Common myeloid progenitor, CD34-positive (primary cell): ENCODE measurements at regions of chr17 and their contacts with region 1.

Region 1: GRCh38 chr17:29148790-29149430 is 31.3 kb downstream of the MYO18A start:
- DNase-seq: peak; percentile 85 to 87 (median 86)
- H3K4me3 ChIP-seq: peak overlapping the region; percentile 31 to 82 (median 61)
- H3K27ac ChIP-seq: peak overlapping the region; percentile 59 to 82
- H3K4me1 ChIP-seq: peaks cover 15 to 61% (median 45%) of the 10 kb centered on the region in 4 experiments
- H3K27me3 ChIP-seq: no peaks in the 10 kb centered on the region

Region 2: DNA sequence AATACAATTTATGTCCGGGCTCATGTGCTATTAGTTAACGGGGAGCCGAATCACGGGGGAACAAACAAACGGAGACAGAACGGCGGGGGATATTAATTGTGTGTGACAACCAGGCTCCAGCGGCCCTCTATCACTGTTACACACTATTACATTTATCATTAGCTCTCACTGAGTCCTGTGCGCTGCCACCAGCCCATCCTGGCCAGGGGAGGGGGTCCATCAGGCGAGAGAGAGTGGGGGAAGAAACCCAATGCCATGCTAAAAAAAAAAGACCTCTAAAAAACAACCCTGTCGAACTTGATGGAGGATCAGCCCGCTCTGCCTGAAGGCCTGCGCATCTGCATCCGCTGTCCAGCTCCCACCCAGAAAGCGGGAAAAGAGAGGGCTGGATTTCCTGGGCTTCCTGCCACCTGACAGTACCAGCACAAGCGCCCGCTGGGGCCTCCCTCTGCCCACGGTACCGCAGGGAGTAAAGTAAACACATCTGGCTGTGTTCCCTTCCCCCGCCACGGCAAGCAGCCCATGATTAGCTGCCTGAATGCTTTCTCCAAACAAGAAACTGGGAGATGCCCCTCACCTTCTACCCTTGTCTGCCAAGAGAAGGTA is 64.3 kb before region 1 on chr17:
- CTCF ChIA-PET with region 1: no interaction called
- POLR2A ChIA-PET with region 1: no interaction called
- DNase-seq: no peak
- H3K4me3 ChIP-seq: no peak overlapping the region
- H3K27ac ChIP-seq: peak overlapping the region in 1 of 2 experiments; percentile 26
- H3K4me1 ChIP-seq: no peaks in the 10 kb centered on the region
- H3K27me3 ChIP-seq: no peaks in the 10 kb centered on the region

Region 3: GRCh38 chr17:29102741-29103181 is 46.1 kb before region 1 on chr17:
- CTCF ChIA-PET with region 1: no interaction called
- POLR2A ChIA-PET with region 1: no interaction called
- DNase-seq: no peak
- H3K4me3 ChIP-seq: no peak overlapping the region
- H3K27ac ChIP-seq: peak overlapping the region in 1 of 2 experiments; percentile 15
- H3K4me1 ChIP-seq: peaks cover 0 to 6% (median 0%) of the 10 kb centered on the region in 4 experiments
- H3K27me3 ChIP-seq: no peaks in the 10 kb centered on the region

Region 4: GRCh38 chr17:29162738-29163341 is 13.9 kb after region 1 on chr17:
- CTCF ChIA-PET with region 1: interaction called, 40 read pairs
- POLR2A ChIA-PET with region 1: no interaction called
- DNase-seq: no peak
- H3K4me3 ChIP-seq: no peak overlapping the region
- H3K27ac ChIP-seq: no peak overlapping the region
- H3K4me1 ChIP-seq: peaks cover 0 to 16% (median 4%) of the 10 kb centered on the region in 4 experiments
- H3K27me3 ChIP-seq: no peaks in the 10 kb centered on the region

Region 5: GRCh38 chr17:29180034-29180787 is 31.3 kb after region 1 on chr17 and contains the start of gene MYO18A:
- CTCF ChIA-PET with region 1: interaction called, 76 read pairs
- POLR2A ChIA-PET with region 1: interaction called, 7 read pairs
- DNase-seq: peak; percentile 70 to 77 (median 76)
- H3K4me3 ChIP-seq: peak within 1 kb of the TSS; percentile 11 to 69 (median 57)
- H3K27ac ChIP-seq: no peak within 1 kb of the TSS
- H3K4me1 ChIP-seq: peaks cover 2 to 55% (median 37%) of the 10 kb centered on the region in 4 experiments
- H3K27me3 ChIP-seq: no peaks in the 10 kb centered on the region

Region 6: DNA sequence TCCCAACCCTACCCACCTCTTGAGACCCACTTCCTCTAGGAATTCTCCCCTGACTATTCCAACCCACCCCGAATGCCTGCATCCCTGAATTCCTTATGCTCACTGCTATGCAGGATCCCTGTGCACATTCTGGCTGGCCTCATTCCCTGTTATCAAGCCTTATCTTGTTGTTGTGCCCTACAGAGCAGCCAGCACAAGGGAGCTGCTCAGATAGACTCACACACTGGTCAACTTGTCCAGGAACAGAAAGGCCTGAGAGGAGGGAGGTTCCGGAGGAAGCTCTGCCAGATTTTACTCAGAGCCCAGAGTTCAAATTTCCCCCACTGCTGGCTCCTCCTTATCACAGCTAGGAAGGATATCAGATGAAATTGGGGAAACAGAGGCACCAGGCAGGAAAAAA is 56.1 kb after region 1 on chr17:
- CTCF ChIA-PET with region 1: interaction called, 11 read pairs
- POLR2A ChIA-PET with region 1: no interaction called
- DNase-seq: no peak
- H3K4me3 ChIP-seq: no peak overlapping the region
- H3K27ac ChIP-seq: no peak overlapping the region
- H3K4me1 ChIP-seq: no peaks in the 10 kb centered on the region
- H3K27me3 ChIP-seq: peaks cover 0 to 2% (median 0%) of the 10 kb centered on the region in 5 experiments